CD4-positive, alpha-beta memory T cell (primary cell): ENCODE measurements at regions of chr9 and their contacts with region 1.

Region 1: DNA sequence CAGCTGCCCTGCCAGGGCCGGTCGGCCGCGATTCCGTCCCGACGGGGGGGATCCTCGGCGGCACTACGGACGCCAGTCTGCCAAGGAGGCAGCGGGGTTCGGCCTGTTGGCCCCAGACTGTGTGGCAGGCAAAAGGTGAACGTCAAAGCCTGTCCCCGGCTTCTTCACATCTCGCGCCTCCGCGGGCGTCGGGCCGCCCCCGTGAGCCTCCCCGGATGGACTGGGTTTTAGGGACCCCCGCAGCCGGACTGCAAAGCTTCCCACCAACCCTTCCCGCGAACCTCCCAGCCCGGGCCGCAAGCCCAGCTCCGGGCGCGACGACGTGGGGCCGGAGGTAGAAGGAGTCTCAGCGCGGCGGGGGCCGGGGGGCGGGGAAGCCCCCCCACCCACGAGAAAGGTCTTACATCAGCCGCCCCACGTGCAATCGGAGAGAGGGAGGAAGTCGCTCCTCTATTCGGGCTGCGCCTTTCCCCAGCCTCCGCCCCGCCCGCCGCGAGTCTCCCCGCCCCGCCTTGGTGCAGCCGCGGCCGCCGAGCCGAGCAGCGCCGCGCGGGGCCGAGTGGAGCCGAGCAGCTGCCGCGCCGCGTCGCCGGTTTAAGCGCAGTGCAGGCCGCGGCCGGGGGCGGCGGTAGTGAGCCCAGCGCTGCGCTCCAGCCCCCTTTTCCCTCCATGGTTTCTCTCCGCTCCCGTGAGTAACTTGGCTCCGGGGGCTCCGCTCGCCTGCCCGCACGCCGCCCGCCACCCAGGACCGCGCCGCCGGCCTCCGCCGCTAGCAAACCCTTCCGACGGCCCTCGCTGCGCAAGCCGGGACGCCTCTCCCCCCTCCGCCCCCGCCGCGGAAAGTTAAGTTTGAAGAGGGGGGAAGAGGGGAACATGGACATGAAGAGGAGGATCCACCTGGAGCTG is at the start of gene ANP32B:
- DNase-seq: peak; percentile 92 to 95 (median 94)
- H3K4me3 ChIP-seq: peak within 1 kb of the TSS; percentile 54 to 81
- H3K4me3 Mint-ChIP-seq: peak within 1 kb of the TSS; percentile 77 to 94 (median 86)
- H3K27ac ChIP-seq: peak within 1 kb of the TSS; percentile 85
- H3K27ac Mint-ChIP-seq: peak within 1 kb of the TSS; percentile 81 to 91 (median 89)
- H3K4me1 ChIP-seq: peaks cover 37% of the 10 kb centered on the region
- H3K4me1 Mint-ChIP-seq: peaks cover 17 to 47% (median 31%) of the 10 kb centered on the region in 4 donors
- H3K27me3 ChIP-seq: no peaks in the 10 kb centered on the region
- H3K27me3 Mint-ChIP-seq: no peaks in the 10 kb centered on the region
- total RNA-seq, gene ANP32B: 164 to 168 TPM

Region 2: GRCh38 chr9:97632985-97633858 is 349.7 kb before region 1 on chr9 and contains the starts of genes NCBP1 and TSTD2:
- CTCF ChIA-PET with region 1: no interaction called
- POLR2A ChIA-PET with region 1: interaction called, 13 read pairs
- intact Hi-C with region 1: loop called (anchors 1 kb)
- DNase-seq: peak; percentile 96 to 97 (median 97)
- H3K4me3 ChIP-seq: peak within 1 kb of the TSS; percentile 80 to 87
- H3K4me3 Mint-ChIP-seq: peak within 1 kb of the TSS; percentile 96 to 100 (median 98)
- H3K27ac ChIP-seq: peak within 1 kb of the TSS; percentile 92
- H3K27ac Mint-ChIP-seq: peak within 1 kb of the TSS; percentile 96 to 100 (median 100)
- H3K4me1 ChIP-seq: peaks cover 52% of the 10 kb centered on the region
- H3K4me1 Mint-ChIP-seq: peaks cover 37 to 65% (median 51%) of the 10 kb centered on the region in 4 donors
- H3K27me3 ChIP-seq: no peaks in the 10 kb centered on the region
- H3K27me3 Mint-ChIP-seq: no peaks in the 10 kb centered on the region
- total RNA-seq, gene NCBP1: 40.7 to 50.8 TPM
- total RNA-seq, gene TSTD2: 17.8 to 18.4 TPM

Region 3: GRCh38 chr9:97930972-97931371 is 52.0 kb before region 1 on chr9:
- CTCF ChIA-PET with region 1: interaction called, 3 read pairs
- POLR2A ChIA-PET with region 1: interaction called, 22 read pairs
- intact Hi-C with region 1: no loop called
- DNase-seq: peak in 1 of 5 donors; percentile 21
- H3K4me3 ChIP-seq: no peak overlapping the region
- H3K4me3 Mint-ChIP-seq: peak overlapping the region; percentile 67 to 86 (median 80)
- H3K27ac ChIP-seq: peak overlapping the region; percentile 21
- H3K27ac Mint-ChIP-seq: peak overlapping the region; percentile 71 to 94 (median 90)
- H3K4me1 ChIP-seq: peaks cover 41% of the 10 kb centered on the region
- H3K4me1 Mint-ChIP-seq: peaks cover 25 to 52% (median 37%) of the 10 kb centered on the region in 4 donors
- H3K27me3 ChIP-seq: no peaks in the 10 kb centered on the region
- H3K27me3 Mint-ChIP-seq: no peaks in the 10 kb centered on the region

Region 4: GRCh38 chr9:98006127-98006796 is 23.3 kb after region 1 on chr9:
- CTCF ChIA-PET with region 1: interaction called, 6 read pairs
- POLR2A ChIA-PET with region 1: interaction called, 15 read pairs
- intact Hi-C with region 1: no loop called
- DNase-seq: no peak
- H3K4me3 ChIP-seq: no peak overlapping the region
- H3K4me3 Mint-ChIP-seq: no peak overlapping the region
- H3K27ac ChIP-seq: no peak overlapping the region
- H3K27ac Mint-ChIP-seq: peak overlapping the region in 3 of 7 donors; percentile 51 to 85 (median 71)
- H3K4me1 ChIP-seq: peaks cover 7% of the 10 kb centered on the region
- H3K4me1 Mint-ChIP-seq: peaks cover 13 to 28% (median 22%) of the 10 kb centered on the region in 4 donors
- H3K27me3 ChIP-seq: no peaks in the 10 kb centered on the region
- H3K27me3 Mint-ChIP-seq: no peaks in the 10 kb centered on the region

Region 5: GRCh38 chr9:98056269-98057137 is 73.6 kb after region 1 on chr9 and contains the start of gene NANS:
- CTCF ChIA-PET with region 1: interaction called, 3 read pairs
- POLR2A ChIA-PET with region 1: interaction called, 18 read pairs
- intact Hi-C with region 1: loop called (anchors 1 kb)
- DNase-seq: peak; percentile 88 to 94 (median 90)
- H3K4me3 ChIP-seq: peak within 1 kb of the TSS; percentile 56 to 76
- H3K4me3 Mint-ChIP-seq: peak within 1 kb of the TSS; percentile 96 to 100 (median 99)
- H3K27ac ChIP-seq: peak within 1 kb of the TSS; percentile 82
- H3K27ac Mint-ChIP-seq: peak within 1 kb of the TSS; percentile 90 to 99 (median 99)
- H3K4me1 ChIP-seq: peaks cover 22% of the 10 kb centered on the region
- H3K4me1 Mint-ChIP-seq: peaks cover 12 to 32% (median 22%) of the 10 kb centered on the region in 4 donors
- H3K27me3 ChIP-seq: no peaks in the 10 kb centered on the region
- H3K27me3 Mint-ChIP-seq: no peaks in the 10 kb centered on the region
- total RNA-seq, gene NANS: 22.1 to 23.2 TPM

Region 6: GRCh38 chr9:98255578-98256296 is 272.8 kb after region 1 on chr9 and contains the start of gene TBC1D2:
- CTCF ChIA-PET with region 1: interaction called, 13 read pairs
- POLR2A ChIA-PET with region 1: interaction called, 41 read pairs
- intact Hi-C with region 1: loop called (anchors 1 kb)
- DNase-seq: peak; percentile 96 to 98 (median 97)
- H3K4me3 ChIP-seq: peak within 1 kb of the TSS; percentile 90 to 91
- H3K4me3 Mint-ChIP-seq: peak within 1 kb of the TSS; percentile 93 to 99 (median 97)
- H3K27ac ChIP-seq: peak within 1 kb of the TSS; percentile 82
- H3K27ac Mint-ChIP-seq: peak within 1 kb of the TSS; percentile 87 to 97 (median 95)
- H3K4me1 ChIP-seq: peaks cover 35% of the 10 kb centered on the region
- H3K4me1 Mint-ChIP-seq: peaks cover 23 to 50% (median 40%) of the 10 kb centered on the region in 4 donors
- H3K27me3 ChIP-seq: no peaks in the 10 kb centered on the region
- H3K27me3 Mint-ChIP-seq: no peaks in the 10 kb centered on the region
- total RNA-seq, gene TBC1D2: 11.2 to 11.4 TPM